Upper lobe of right lung (tissue), 1 donor: ENCODE measurements at regions of chr17 and their contacts with region 1.

Region 1: GRCh38 chr17:61389670-61390478 is 9.8 kb upstream of the TBX2 start:
- DNase-seq: peak; percentile 77
- ATAC-seq: peak; percentile 68
- H3K4me3 ChIP-seq: no peak overlapping the region
- H3K27ac ChIP-seq: peak overlapping the region; percentile 42
- H3K4me1 ChIP-seq: peaks cover 9% of the 10 kb centered on the region
- H3K27me3 ChIP-seq: no peaks in the 10 kb centered on the region
- CTCF ChIP-seq: peak; percentile 91

Region 2: DNA sequence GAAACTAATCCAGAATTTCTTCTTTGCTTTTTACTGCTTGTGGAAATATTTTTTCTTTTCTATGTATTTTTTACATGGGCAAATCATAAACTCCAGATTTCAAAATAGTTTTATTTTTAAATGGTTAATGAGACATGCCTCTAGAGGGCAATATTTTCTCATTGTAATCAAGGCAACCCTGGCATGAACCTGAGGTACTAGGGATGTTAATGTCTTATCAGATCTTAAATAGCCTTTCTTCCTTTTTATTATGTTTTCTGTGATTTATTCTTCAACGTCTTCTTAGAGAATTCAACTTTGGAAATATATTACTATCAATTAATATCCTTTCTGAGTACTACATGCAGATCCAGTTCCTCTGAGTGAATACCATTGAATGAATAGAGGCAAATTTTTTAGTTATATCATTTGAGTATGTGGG is 387.5 kb before region 1 on chr17:
- intact Hi-C with region 1: loop called (anchors 10 kb)
- DNase-seq: no peak
- ATAC-seq: peak; percentile 64
- H3K4me3 ChIP-seq: no peak overlapping the region
- H3K27ac ChIP-seq: no peak overlapping the region
- H3K4me1 ChIP-seq: peaks cover 7% of the 10 kb centered on the region
- H3K27me3 ChIP-seq: no peaks in the 10 kb centered on the region
- CTCF ChIP-seq: peak; percentile 59